Panc1 (cell line): ENCODE measurements at regions of chr2 and their contacts with region 1.

Region 1: DNA sequence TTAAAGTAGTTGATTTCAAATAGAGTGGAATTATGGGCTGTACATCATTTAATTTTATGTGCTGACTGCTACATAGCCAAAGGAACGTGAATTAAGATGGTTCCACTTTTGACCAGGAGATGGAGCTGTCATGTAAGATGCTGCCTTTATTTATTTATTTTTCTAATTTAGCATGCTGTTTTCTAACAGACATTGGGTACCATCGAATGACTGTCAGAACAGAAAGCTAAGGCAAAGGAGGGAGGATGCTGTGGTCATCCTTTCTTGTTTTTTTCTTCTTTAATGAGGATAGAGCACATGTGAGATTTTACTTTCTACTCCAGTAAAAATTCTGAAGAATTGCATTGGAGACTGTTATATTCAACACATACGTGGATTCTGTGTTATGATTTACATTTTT is at the start of gene SCN2A:
- DNase-seq: peak; percentile 35
- ATAC-seq: no peak
- H3K4me3 ChIP-seq: no peak within 1 kb of the TSS
- H3K27ac ChIP-seq: no peak within 1 kb of the TSS
- H3K4me1 ChIP-seq: no peaks in the 10 kb centered on the region
- H3K27me3 ChIP-seq: no peaks in the 10 kb centered on the region
- CTCF ChIP-seq: peak; percentile 72; the same call in 1 of the 2 replicates
- total RNA-seq, gene SCN2A: not detected

Region 2: DNA sequence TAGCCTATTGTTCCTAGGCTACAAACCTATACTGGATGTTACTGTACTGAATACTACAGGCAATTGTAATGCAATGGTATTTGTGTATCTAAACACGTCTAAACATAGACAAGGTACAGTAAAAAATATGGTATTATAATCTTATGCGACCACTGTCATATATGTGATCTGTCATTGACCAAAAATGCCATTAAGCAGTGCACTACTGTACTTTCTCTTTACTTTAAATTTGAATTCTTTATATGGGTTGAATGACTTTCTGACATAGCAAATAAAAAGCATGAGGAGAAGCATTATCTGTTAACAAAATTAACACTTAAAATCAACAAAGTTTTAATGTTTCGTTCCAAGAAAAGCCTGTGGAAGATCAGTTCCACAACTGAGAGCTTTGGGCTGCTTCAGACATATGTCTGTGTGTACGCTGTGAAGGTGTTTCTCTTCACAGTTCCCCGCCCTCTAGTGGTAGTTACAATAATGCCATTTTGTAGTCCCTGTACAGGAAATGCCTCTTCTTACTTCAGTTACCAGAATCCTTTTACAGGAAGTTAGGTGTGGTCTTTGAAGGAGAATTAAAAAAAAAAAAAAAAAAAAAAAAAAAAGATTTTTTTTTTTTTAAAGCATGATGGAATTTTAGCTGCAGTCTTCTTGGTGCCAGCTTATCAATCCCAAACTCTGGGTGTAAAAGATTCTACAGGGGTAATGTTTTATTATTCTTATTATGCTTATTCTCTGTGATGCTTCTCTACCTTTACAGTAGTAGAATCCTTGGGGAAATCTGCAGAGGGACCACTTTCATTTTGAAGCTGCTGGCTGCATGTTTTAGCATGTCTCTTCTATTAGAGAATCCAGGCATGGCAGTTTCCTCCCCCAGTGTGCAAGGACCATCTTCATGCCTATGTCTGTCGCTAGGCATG is 54.5 kb after region 1 on chr2:
- CTCF ChIA-PET with region 1: no interaction called
- POLR2A ChIA-PET with region 1: no interaction called
- in situ Hi-C with region 1: no loop called
- intact Hi-C with region 1: loop called (anchors 2 kb)
- DNase-seq: peak; percentile 55
- ATAC-seq: peak; percentile 96
- H3K4me3 ChIP-seq: peak overlapping the region in 1 of 2 experiments; percentile 32; a peak in 1 of 4 replicates
- H3K27ac ChIP-seq: no peak overlapping the region
- H3K4me1 ChIP-seq: no peaks in the 10 kb centered on the region
- H3K27me3 ChIP-seq: no peaks in the 10 kb centered on the region
- CTCF ChIP-seq: peak; percentile 69

Region 3: GRCh38 chr2:165601928-165602521 is 362.8 kb after region 1 on chr2:
- CTCF ChIA-PET with region 1: no interaction called
- POLR2A ChIA-PET with region 1: no interaction called
- in situ Hi-C with region 1: no loop called
- intact Hi-C with region 1: no loop called
- DNase-seq: no peak
- ATAC-seq: no peak
- H3K4me3 ChIP-seq: no peak overlapping the region
- H3K27ac ChIP-seq: no peak overlapping the region
- H3K4me1 ChIP-seq: no peaks in the 10 kb centered on the region
- H3K27me3 ChIP-seq: no peaks in the 10 kb centered on the region
- CTCF ChIP-seq: no peak